Calu3 (cell line): ENCODE measurements at regions of chr4 and their contacts with region 1.

Region 1: GRCh38 chr4:37561803-37562207 is 124.4 kb downstream of the RELL1 start:
- DNase-seq: peak; percentile 73
- H3K4me3 Mint-ChIP-seq: no peak overlapping the region
- H3K27ac Mint-ChIP-seq: peak overlapping the region; percentile 73
- H3K4me1 Mint-ChIP-seq: peaks cover 42% of the 10 kb centered on the region
- H3K27me3 Mint-ChIP-seq: no peaks in the 10 kb centered on the region
- CTCF ChIP-seq: no peak

Region 2: DNA sequence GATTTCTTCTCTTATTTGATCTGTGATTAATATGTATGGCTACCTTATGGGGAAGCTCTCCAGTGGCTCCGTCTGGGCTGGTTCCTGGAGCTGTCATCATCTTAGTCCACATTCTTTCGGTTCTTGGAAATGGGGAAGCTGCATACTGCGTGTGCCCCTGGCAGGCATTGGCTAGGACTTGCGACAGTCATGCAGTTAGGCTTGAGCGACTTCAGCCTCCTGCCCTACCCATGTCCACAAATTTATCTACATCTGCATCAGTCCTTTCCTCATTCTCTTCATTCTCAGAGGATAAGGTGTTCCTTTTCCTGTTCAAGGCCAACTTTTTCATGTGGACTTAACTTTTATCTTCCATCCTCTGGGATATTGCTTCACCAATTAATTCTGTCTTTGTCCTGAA is 89.8 kb before region 1 on chr4:
- CTCF ChIA-PET with region 1: interaction called, 6 read pairs
- intact Hi-C with region 1: loop called (anchors 2 kb)
- DNase-seq: peak; percentile 79
- H3K4me3 Mint-ChIP-seq: peak overlapping the region; percentile 46
- H3K27ac Mint-ChIP-seq: peak overlapping the region; percentile 59
- H3K4me1 Mint-ChIP-seq: peaks cover 61% of the 10 kb centered on the region
- H3K27me3 Mint-ChIP-seq: no peaks in the 10 kb centered on the region
- CTCF ChIP-seq: no peak

Region 3: DNA sequence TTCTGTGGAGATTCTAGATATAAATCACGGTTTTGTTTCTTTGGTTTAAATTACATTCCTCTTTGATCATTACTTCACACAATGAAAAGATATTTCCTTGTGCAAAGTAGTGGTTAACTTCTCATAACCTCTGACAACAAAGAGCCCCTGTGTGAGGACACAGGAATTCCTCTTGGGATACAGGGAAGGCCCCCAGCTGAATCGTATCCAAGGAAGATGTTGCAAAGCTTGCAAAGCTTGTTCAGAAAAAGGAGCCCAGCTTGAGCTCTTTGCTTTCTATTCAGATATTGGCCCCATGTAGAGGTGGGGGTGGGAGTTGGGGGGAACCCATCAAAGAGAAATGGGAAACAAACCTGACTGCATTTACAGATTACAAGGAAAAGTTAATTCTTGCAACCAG is 21.3 kb before region 1 on chr4:
- CTCF ChIA-PET with region 1: interaction called, 3 read pairs
- intact Hi-C with region 1: loop called (anchors 2 kb)
- DNase-seq: peak; percentile 30
- H3K4me3 Mint-ChIP-seq: no peak overlapping the region
- H3K27ac Mint-ChIP-seq: peak overlapping the region; percentile 42
- H3K4me1 Mint-ChIP-seq: peaks cover 55% of the 10 kb centered on the region
- H3K27me3 Mint-ChIP-seq: no peaks in the 10 kb centered on the region
- CTCF ChIP-seq: no peak

Region 4: DNA sequence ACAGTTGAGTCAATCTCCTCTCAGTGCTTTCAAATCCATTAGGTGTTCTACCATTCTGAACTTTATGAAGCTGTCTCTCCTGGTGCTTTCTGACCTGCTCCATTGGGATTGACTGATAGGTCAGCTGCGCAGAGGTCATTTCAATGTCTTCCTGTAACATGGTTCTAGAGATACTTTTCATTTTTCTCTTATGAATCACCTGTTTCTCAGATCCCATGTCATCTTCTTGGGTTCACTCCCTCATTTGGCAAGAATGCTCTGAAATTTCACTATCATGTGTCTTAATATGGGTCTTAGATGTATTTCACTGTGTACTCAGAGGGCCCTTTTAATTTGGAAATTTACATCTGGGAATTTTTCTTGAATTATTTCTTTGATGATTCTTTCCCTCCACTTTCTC is 250.9 kb after region 1 on chr4:
- CTCF ChIA-PET with region 1: no interaction called
- intact Hi-C with region 1: no loop called
- DNase-seq: no peak
- H3K4me3 Mint-ChIP-seq: no peak overlapping the region
- H3K27ac Mint-ChIP-seq: no peak overlapping the region
- H3K4me1 Mint-ChIP-seq: no peaks in the 10 kb centered on the region
- H3K27me3 Mint-ChIP-seq: no peaks in the 10 kb centered on the region
- CTCF ChIP-seq: no peak